Activated T-helper 1 cell treated with anti-CD3 and anti-CD28 coated beads, Interleukin-12 subunit alpha, Interleukin-12 subunit beta, Interleukin-2, Interleukin-4 antibody, amounts not matched to agents 30 ng/mL and 10 ng/mL and 1 ng/mL, durations not matched to agents 14 hours and 24 hours and 36 hours (primary cell): ENCODE measurements at regions of chr2 and their contacts with region 1.

Region 1: DNA sequence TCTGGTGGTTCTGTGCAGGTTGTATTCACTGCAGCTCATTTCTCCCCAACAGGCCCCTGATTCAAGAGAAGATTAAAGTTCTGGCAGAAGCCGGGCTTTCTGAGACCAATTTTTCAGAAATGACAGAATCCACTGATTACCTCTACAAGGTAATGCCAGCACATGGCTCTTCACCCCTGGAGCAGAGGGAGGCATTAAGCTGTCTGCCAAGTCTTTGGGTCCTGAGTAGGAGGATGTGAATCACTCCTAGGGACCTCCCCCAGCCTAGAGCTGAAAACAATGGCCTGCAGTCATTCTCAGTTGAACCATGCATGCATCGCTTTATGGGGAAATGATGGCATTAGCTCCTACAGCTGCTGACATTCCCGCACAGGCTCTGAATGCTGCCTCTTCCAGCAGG is 20.5 kb upstream of the RPL37A start:
- DNase-seq: no peak
- H3K4me3 Mint-ChIP-seq: no peak overlapping the region
- H3K27ac Mint-ChIP-seq: no peak overlapping the region
- H3K4me1 Mint-ChIP-seq: peaks cover 24% of the 10 kb centered on the region
- H3K27me3 Mint-ChIP-seq: no peaks in the 10 kb centered on the region

Region 2: GRCh38 chr2:216498418-216499413 is 20.6 kb after region 1 on chr2 and contains the start of gene RPL37A:
- intact Hi-C with region 1: loop called (anchors 2 kb)
- DNase-seq: peak; percentile 87
- H3K4me3 Mint-ChIP-seq: peak within 1 kb of the TSS; percentile 93
- H3K27ac Mint-ChIP-seq: peak within 1 kb of the TSS; percentile 86
- H3K4me1 Mint-ChIP-seq: peaks cover 57% of the 10 kb centered on the region
- H3K27me3 Mint-ChIP-seq: no peaks in the 10 kb centered on the region
- total RNA-seq, gene RPL37A: 2,803 and 2,922 TPM in 2 replicates